WTC11 (cell line): ENCODE measurements at regions of chr10 and their contacts with region 1.

Region 1: DNA sequence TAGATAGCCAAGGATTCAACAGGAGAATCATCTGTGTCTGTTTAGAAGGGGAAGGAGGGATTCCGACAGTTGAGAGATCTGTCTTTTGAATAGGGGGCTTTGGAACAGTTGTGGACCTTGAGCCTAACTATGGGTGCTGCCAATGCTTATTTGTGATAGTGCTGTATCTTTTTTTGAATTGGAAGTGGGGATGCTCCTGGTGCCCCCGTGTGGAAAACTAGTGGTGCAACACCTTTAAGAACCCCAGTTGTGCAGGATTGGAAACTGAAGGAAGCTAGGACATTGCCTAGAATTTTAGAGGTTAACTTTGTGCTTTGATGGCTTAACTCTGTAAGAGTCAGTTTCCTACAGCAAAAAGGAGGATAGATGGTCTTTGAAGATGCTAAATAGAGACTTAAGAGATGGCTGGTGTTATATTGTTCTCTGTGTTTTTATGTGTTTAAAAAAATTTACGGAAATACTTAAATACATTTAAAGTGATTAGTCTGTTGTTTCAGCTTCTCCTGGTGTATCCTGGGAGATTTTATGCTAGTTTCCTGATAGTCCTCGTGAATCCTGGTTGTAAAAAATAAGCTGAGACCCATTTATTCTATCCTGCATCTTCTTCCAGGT is 69.3 kb downstream of the AP3M1 start:
- DNase-seq: peak; percentile 40
- ATAC-seq: peak; percentile 71
- H3K4me3 Mint-ChIP-seq: no peak overlapping the region
- H3K27ac Mint-ChIP-seq: peak overlapping the region; percentile 54; the same call in 1 of the 2 replicates
- H3K4me1 Mint-ChIP-seq: peaks cover 52% of the 10 kb centered on the region
- H3K27me3 Mint-ChIP-seq: no peaks in the 10 kb centered on the region
- CTCF ChIP-seq: peak; percentile 59

Region 2: GRCh38 chr10:73601486-73601921 is 479.8 kb before region 1 on chr10:
- CTCF ChIA-PET with region 1: no interaction called
- POLR2A ChIA-PET with region 1: no interaction called
- DNase-seq: no peak
- ATAC-seq: peak; percentile 89
- H3K4me3 Mint-ChIP-seq: no peak overlapping the region
- H3K27ac Mint-ChIP-seq: peak overlapping the region; percentile 93
- H3K4me1 Mint-ChIP-seq: peaks cover 11% of the 10 kb centered on the region
- H3K27me3 Mint-ChIP-seq: no peaks in the 10 kb centered on the region
- CTCF ChIP-seq: no peak

Region 3: GRCh38 chr10:73956476-73957359 is 124.6 kb before region 1 on chr10:
- CTCF ChIA-PET with region 1: interaction called, 16 read pairs
- POLR2A ChIA-PET with region 1: no interaction called
- DNase-seq: no peak
- ATAC-seq: peak; percentile 43
- H3K4me3 Mint-ChIP-seq: no peak overlapping the region
- H3K27ac Mint-ChIP-seq: no peak overlapping the region; the same call in 1 of the 2 replicates
- H3K4me1 Mint-ChIP-seq: peaks cover 10% of the 10 kb centered on the region
- H3K27me3 Mint-ChIP-seq: no peaks in the 10 kb centered on the region
- CTCF ChIP-seq: no peak

Region 4: GRCh38 chr10:74103560-74104248 is 22.4 kb after region 1 on chr10:
- CTCF ChIA-PET with region 1: interaction called, 14 read pairs
- POLR2A ChIA-PET with region 1: interaction called, 3 read pairs
- DNase-seq: no peak
- ATAC-seq: peak; percentile 81
- H3K4me3 Mint-ChIP-seq: no peak overlapping the region
- H3K27ac Mint-ChIP-seq: peak overlapping the region; percentile 71; the same call in 1 of the 2 replicates
- H3K4me1 Mint-ChIP-seq: no peaks in the 10 kb centered on the region
- H3K27me3 Mint-ChIP-seq: no peaks in the 10 kb centered on the region
- CTCF ChIP-seq: no peak